CD4-positive, alpha-beta memory T cell (primary cell): ENCODE measurements at regions of chr3 and their contacts with region 1.

Region 1: DNA sequence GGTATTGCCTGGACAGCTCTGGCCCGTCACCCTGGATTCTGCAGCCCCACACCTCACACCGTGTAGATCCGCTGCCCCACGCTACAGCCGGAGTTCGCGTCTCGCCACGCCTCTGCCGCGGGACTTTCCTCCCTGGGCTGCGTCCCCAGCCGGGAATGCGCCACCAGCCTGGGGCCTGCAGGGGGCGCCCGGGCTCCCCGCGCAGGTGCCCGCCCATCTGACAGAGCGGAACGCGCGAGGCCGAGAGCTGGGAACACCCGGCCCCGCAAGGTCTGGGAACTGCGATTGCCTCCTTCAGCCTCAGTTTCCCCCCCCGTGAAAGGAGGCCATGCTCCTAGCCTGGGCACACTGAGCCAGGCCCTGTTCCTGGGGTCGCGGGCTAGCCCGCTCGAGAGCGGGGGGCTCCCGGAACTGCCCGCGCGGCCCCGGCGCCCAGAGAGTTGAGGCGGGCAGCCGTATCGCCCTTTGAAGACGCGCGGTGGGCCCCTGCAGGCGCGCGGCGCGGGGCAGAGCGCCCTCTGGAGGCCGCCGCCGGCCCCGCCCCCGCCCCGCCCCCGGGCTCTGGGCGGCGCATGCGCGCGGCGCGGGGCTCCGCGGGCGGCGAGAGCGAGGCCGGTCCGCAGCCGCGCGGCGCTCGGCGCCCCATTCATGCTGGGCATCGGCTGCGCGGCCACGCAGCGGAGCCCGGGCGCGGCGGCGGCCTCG is at the start of gene PLXNA1:
- DNase-seq: peak; percentile 88 to 97 (median 95)
- H3K4me3 ChIP-seq: peak within 1 kb of the TSS; percentile 61 to 76
- H3K4me3 Mint-ChIP-seq: peak within 1 kb of the TSS; percentile 84 to 92 (median 89)
- H3K27ac ChIP-seq: peak within 1 kb of the TSS; percentile 83
- H3K27ac Mint-ChIP-seq: peak within 1 kb of the TSS; percentile 95 to 98 (median 97)
- H3K4me1 ChIP-seq: peaks cover 17% of the 10 kb centered on the region
- H3K4me1 Mint-ChIP-seq: peaks cover 6 to 29% (median 17%) of the 10 kb centered on the region in 4 donors
- H3K27me3 ChIP-seq: no peaks in the 10 kb centered on the region
- H3K27me3 Mint-ChIP-seq: peaks cover 5 to 7% of the 10 kb centered on the region in 2 donors
- total RNA-seq, gene PLXNA1: 18.9 to 21.3 TPM

Region 2: GRCh38 chr3:126475413-126476114 is 507.1 kb before region 1 on chr3 and contains the start of gene ZXDC:
- CTCF ChIA-PET with region 1: no interaction called
- POLR2A ChIA-PET with region 1: no interaction called
- intact Hi-C with region 1: loop called (anchors 1 kb)
- DNase-seq: peak; percentile 90 to 93 (median 92)
- H3K4me3 ChIP-seq: peak within 1 kb of the TSS; percentile 60 to 73
- H3K4me3 Mint-ChIP-seq: peak within 1 kb of the TSS; percentile 87 to 94 (median 92)
- H3K27ac ChIP-seq: peak within 1 kb of the TSS; percentile 64
- H3K27ac Mint-ChIP-seq: peak within 1 kb of the TSS; percentile 83 to 98 (median 92)
- H3K4me1 ChIP-seq: peaks cover 36% of the 10 kb centered on the region
- H3K4me1 Mint-ChIP-seq: peaks cover 30 to 55% (median 44%) of the 10 kb centered on the region in 4 donors
- H3K27me3 ChIP-seq: no peaks in the 10 kb centered on the region
- H3K27me3 Mint-ChIP-seq: no peaks in the 10 kb centered on the region
- total RNA-seq, gene ZXDC: 58.2 to 66.3 TPM

Region 3: GRCh38 chr3:126703512-126704462 is 278.8 kb before region 1 on chr3 and contains the start of gene CHCHD6:
- CTCF ChIA-PET with region 1: interaction called, 3 read pairs
- POLR2A ChIA-PET with region 1: interaction called, 4 read pairs
- intact Hi-C with region 1: loop called (anchors 1 kb)
- DNase-seq: peak; percentile 93 to 98 (median 95)
- H3K4me3 ChIP-seq: peak within 1 kb of the TSS; percentile 34 to 81
- H3K4me3 Mint-ChIP-seq: peak within 1 kb of the TSS; percentile 91 to 98 (median 96)
- H3K27ac ChIP-seq: peak within 1 kb of the TSS; percentile 49
- H3K27ac Mint-ChIP-seq: peak within 1 kb of the TSS; percentile 88 to 97 (median 92)
- H3K4me1 ChIP-seq: peaks cover 18% of the 10 kb centered on the region
- H3K4me1 Mint-ChIP-seq: peaks cover 10 to 26% (median 17%) of the 10 kb centered on the region in 4 donors
- H3K27me3 ChIP-seq: no peaks in the 10 kb centered on the region
- H3K27me3 Mint-ChIP-seq: peaks cover 11 to 26% of the 10 kb centered on the region in 2 donors
- total RNA-seq, gene CHCHD6: 7.3 to 8.9 TPM

Region 4: DNA sequence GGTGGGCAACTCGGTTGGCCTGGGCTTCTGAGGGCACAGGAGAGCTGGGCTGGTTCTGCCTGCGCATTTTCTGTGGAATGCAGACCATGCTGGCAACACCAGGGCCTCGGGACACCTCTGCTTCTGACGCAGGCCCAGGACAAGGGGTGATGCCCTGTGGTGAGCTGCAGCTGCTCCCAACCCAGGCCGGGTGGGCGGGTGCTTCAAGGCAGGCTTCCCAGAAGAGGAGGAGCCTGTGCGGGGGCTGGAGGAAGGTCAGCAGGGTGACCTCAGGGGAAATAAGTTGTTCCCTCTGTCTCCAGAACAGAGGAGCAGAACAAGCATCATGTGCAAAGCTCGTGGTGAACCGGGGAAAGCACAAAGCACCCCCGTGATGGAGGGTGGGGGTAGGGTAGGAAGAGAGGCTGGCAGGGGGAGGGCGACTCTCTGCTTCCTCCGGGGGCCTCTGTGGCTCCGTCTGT is 10.7 kb before region 1 on chr3:
- CTCF ChIA-PET with region 1: interaction called, 26 read pairs
- POLR2A ChIA-PET with region 1: no interaction called
- intact Hi-C with region 1: no loop called
- DNase-seq: no peak
- H3K4me3 ChIP-seq: no peak overlapping the region
- H3K4me3 Mint-ChIP-seq: no peak overlapping the region
- H3K27ac ChIP-seq: no peak overlapping the region
- H3K27ac Mint-ChIP-seq: no peak overlapping the region
- H3K4me1 ChIP-seq: no peaks in the 10 kb centered on the region
- H3K4me1 Mint-ChIP-seq: no peaks in the 10 kb centered on the region
- H3K27me3 ChIP-seq: no peaks in the 10 kb centered on the region
- H3K27me3 Mint-ChIP-seq: peaks cover 7 to 9% of the 10 kb centered on the region in 2 donors

Region 5: DNA sequence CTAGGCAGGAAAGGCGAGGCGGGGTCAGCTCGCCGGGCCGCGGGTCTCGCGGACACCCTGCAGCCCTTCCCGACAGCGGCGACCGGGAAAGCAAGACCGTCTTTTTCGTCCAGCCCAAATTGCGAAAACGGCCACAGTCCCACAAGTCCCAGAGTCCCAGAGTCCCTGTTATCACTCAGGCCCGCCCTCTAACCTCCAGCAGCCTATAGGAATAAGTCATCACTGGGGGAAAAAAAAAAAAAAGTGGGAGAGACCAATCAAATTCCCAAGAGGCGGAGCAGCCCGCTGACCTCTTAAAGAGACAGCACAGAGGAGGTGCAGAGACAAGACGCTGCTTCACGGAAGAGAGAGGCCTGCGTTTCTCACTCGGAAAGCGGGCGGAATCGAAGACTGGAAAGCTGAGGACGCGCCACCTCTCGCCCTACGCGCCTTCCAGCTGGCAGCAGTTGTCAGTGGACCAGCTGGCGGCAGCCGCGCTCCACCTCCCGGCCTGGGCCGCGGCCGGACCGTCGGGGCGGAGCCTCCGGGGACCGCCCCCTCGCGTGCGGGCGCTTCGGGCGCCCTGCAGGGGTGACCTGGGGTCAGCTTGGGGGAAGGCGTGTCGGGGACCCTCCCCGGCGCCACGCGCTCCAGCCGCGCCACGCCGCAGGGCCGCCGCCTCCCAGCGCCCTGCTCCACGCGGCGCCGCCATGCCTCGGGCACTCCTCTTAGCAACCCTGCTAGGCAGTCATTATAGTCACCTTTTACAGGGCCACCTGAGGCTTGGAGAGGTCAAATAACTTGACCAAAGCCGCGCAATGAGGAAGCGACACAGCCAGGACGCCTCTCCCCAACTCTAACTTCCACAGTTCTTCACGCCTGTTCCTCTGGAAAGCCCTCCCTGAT is 608.2 kb after region 1 on chr3 and contains the start of gene TPRA1:
- CTCF ChIA-PET with region 1: no interaction called
- POLR2A ChIA-PET with region 1: no interaction called
- intact Hi-C with region 1: loop called (anchors 10 kb)
- DNase-seq: peak; percentile 83 to 90 (median 88)
- H3K4me3 ChIP-seq: peak within 1 kb of the TSS; percentile 81 to 83
- H3K4me3 Mint-ChIP-seq: peak within 1 kb of the TSS; percentile 96 to 100 (median 98)
- H3K27ac ChIP-seq: peak within 1 kb of the TSS; percentile 73
- H3K27ac Mint-ChIP-seq: peak within 1 kb of the TSS; percentile 93 to 98 (median 96)
- H3K4me1 ChIP-seq: peaks cover 26% of the 10 kb centered on the region
- H3K4me1 Mint-ChIP-seq: peaks cover 16 to 50% (median 36%) of the 10 kb centered on the region in 4 donors
- H3K27me3 ChIP-seq: no peaks in the 10 kb centered on the region
- H3K27me3 Mint-ChIP-seq: no peaks in the 10 kb centered on the region
- total RNA-seq, gene TPRA1: 28.3 to 29.7 TPM